PC-3 (cell line): ENCODE measurements at regions of chr15 and their contacts with region 1.

Region 1: DNA sequence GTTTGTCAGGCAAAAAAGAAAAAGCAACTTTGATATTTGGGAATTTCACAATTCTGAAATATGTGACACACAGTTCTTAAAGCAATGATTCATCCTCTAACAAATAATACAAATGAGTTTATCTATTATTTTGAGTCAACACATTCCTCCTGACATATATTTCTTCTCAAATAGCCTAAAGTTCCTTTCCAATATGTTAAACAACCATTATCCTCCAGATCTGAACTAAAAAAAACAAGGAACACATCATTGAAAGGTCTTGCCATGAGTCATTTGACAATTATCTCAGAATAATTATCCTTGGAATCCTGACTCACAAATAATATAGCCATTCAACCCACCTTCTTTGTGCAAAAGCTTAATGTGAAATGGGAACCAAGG is 208.7 kb upstream of the CDIN1 start:
- DNase-seq: peak; percentile 95
- ATAC-seq: peak; percentile 86
- H3K4me3 ChIP-seq: peak overlapping the region; percentile 5; the same call in 1 of the 2 replicates
- H3K27ac ChIP-seq: peak overlapping the region; percentile 87
- H3K4me1 ChIP-seq: peaks cover 60% of the 10 kb centered on the region
- H3K27me3 ChIP-seq: no peaks in the 10 kb centered on the region
- CTCF ChIP-seq: no peak

Region 2: GRCh38 chr15:35038660-35039451 is 1331.9 kb before region 1 on chr15:
- CTCF ChIA-PET with region 1: no interaction called
- POLR2A ChIA-PET with region 1: no interaction called
- intact Hi-C with region 1: loop called (anchors 10 kb)
- DNase-seq: peak; percentile 42
- ATAC-seq: no peak
- H3K4me3 ChIP-seq: no peak overlapping the region
- H3K27ac ChIP-seq: no peak overlapping the region
- H3K4me1 ChIP-seq: peaks cover 2% of the 10 kb centered on the region; the same call in 1 of the 2 replicates
- H3K27me3 ChIP-seq: no peaks in the 10 kb centered on the region
- CTCF ChIP-seq: no peak

Region 3: GRCh38 chr15:36334059-36334458 is 36.7 kb before region 1 on chr15:
- CTCF ChIA-PET with region 1: no interaction called
- POLR2A ChIA-PET with region 1: no interaction called
- intact Hi-C with region 1: loop called (anchors 2 kb)
- DNase-seq: peak; percentile 58
- ATAC-seq: no peak; the same call in 1 of the 2 replicates
- H3K4me3 ChIP-seq: no peak overlapping the region
- H3K27ac ChIP-seq: peak overlapping the region; percentile 96
- H3K4me1 ChIP-seq: peaks cover 34% of the 10 kb centered on the region
- H3K27me3 ChIP-seq: no peaks in the 10 kb centered on the region
- CTCF ChIP-seq: no peak